Posterior vena cava (tissue), 2 donors: ENCODE measurements at regions of chr11 and their contacts with region 1.

Region 1: DNA sequence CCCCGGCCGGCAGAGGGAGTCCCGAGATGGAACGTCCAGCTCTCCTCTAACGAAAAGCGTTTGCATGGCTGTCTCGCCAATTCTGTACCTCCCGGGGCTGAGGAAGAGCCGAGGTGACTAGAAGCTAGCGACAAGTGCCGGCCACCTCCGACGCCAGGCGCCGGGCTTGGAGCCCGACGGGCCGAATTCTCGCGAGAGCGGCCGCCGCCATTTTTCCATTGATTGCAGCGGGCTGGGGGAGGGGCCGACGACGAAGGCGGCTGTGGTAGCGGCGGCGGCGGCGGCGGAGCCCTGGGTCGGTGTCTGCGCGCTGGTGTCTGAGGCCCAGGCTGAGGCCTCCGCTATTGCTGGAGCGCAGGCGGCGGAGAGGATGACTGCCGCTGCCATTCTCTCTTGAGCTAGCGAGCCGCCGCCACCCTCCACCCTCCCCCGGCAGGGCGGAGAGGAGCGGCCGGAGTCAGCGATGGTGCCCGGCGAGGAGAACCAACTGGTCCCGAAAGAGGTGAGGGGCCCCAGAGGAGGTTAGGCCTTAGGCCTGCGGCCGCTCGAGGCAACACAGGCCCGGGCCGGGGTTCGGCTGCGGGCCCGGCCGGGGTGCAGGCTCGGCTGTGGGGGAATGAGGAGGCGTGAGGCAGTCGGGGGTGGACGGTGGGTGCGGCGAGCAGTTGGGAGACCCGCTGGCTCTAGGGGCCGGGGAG is at the start of gene USP47:
- DNase-seq: peak; percentile 98
- total RNA-seq, gene USP47: 49.4 to 57.8 TPM

Region 2: GRCh38 chr11:11871991-11872401 is 30.1 kb after region 1 on chr11:
- intact Hi-C with region 1: loop called in 1 of 2 experiments (anchors 2 kb)
- DNase-seq: no peak